ENCODE measurements at regions of chr6 and their contacts with region 1.

Region 1: DNA sequence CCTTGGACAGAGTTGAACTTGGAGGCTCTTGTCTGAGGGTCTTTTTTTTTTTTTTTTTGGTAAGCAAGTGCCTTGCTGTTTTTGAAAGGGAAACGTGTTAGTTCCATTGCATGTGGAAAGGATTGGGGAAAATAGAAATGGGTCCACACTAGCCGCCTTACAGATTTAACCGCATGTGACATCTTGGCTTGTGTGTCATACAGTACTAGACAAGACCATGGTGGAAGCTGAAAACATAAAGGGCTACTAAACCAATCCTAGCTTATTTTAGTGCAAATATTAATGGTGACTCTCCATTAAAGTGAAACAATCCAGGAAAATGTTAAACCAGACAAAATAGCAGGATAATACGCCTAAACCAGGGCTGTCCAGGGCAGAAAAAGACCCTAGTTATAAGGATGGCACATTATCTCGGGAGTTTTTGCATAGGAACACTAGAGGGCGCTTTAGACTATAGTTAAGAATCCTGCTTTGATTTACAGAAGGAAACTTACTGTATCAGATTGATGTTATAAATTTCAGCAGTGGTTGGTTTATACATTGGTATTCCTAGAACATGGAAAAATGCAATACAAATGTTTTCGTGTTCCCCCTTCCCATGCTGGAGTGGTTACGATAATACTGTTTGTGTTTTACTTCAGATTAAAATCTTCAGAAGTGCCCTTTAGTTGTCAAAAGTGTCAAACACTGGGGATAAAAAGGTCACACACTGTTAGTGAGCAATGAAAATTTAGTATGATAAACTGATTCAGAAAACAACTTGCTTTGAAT is 59.8 kb upstream of the DEK start:
- DNase-seq: peak in 1 of 3 donors; percentile 49
- ATAC-seq: peak; percentile 75
- H3K4me3 ChIP-seq: no peak overlapping the region
- H3K4me1 ChIP-seq: no peaks in the 10 kb centered on the region
- CTCF ChIP-seq: no peak

Region 2: GRCh38 chr6:17892097-17892686 is 431.9 kb before region 1 on chr6:
- intact Hi-C with region 1: no loop called
- DNase-seq: no peak
- ATAC-seq: no peak
- H3K4me3 ChIP-seq: no peak overlapping the region
- H3K4me1 ChIP-seq: no peaks in the 10 kb centered on the region
- CTCF ChIP-seq: no peak

Region 3: DNA sequence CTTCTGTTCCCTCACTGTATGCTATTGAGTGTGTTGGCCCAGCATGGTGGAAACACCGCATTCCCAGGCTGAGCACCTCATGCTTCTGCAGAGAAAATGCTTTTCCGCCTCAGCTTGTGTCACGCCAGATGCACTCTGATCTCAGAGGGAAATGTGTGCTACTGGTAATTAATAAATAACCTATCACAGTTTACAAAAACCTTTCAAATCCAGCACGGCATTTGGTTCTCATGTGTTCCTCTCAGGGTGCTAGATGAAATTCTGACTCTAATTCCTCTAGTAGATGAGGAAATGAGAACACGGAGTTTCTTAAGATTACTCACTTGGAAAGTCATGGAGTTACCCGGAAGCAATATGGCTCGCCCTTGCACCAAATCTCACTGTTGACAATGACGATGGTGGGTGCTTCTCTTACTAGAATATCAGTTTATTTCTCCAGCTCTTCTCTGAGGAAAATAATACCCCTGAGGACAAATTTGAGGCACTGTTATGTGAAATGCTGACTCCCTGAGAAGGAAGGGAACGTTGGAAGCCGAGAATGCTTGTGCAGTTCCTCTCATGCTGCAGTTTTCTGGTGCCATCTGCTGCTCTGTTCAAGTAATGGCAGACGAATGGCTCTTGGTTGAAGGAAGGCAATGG is 179.6 kb after region 1 on chr6:
- intact Hi-C with region 1: loop called (anchors 2 to 5 kb)
- DNase-seq: peak in 1 of 3 donors; percentile 69
- ATAC-seq: peak; percentile 92
- H3K4me3 ChIP-seq: no peak overlapping the region
- H3K4me1 ChIP-seq: no peaks in the 10 kb centered on the region
- CTCF ChIP-seq: peak; percentile 48

Measured in mucosa of descending colon (tissue), 3 donors.